ENCODE measurements at regions of chr17 and their contacts with region 1.

Region 1: GRCh38 chr17:47239619-47240374 is 13.8 kb upstream of the ITGB3 start:
- DNase-seq: peak; percentile 96
- H3K4me3 ChIP-seq: no peak overlapping the region
- CTCF ChIP-seq: no peak

Region 2: GRCh38 chr17:47253541-47254402 is 14.0 kb after region 1 on chr17 and contains the start of gene ITGB3:
- CTCF ChIA-PET with region 1: interaction called, 23 read pairs
- POLR2A ChIA-PET with region 1: interaction called, 4 read pairs
- DNase-seq: no peak
- H3K4me3 ChIP-seq: peak within 1 kb of the TSS; percentile 73
- CTCF ChIP-seq: peak; percentile 62